SK-N-SH (cell line): ENCODE measurements at regions of chr3 and their contacts with region 1.

Region 1: DNA sequence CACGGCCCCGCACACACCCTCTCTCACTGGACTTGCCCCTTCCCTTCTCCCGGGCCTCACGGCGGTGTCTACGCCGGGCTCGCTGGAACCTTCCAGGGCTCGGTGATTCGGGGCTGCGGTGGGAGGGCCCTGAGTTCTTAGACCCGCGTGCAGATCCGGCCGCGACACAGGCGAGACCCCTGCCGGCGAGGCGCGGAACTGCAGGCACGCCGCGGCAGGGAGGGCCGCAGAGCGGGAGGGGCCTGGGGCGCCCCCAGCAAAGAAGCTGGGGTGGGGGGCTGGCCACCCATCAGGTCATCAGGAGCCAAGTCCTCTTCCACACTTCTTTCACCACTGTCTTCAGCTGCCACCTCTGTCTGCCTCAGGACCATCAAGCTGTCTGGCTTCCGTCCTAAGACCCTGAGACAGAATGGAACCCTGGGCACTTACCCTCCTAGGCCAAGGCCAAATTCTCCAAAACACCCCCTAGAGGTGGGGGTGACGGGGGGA is 164.5 kb downstream of the XXYLT1 start:
- DNase-seq: peak; percentile 94
- H3K4me3 ChIP-seq: no peak overlapping the region; a peak in 2 of 4 replicates
- H3K27ac ChIP-seq: no peak overlapping the region
- H3K4me1 ChIP-seq: peaks cover 11 to 17% of the 10 kb centered on the region in 2 experiments; a peak in 2 of 4 replicates
- H3K27me3 ChIP-seq: no peaks in the 10 kb centered on the region
- CTCF ChIP-seq: peak; percentile 97
- EP300 ChIP-seq: no peak
- RAD21 ChIP-seq: peak; percentile 88

Region 2: DNA sequence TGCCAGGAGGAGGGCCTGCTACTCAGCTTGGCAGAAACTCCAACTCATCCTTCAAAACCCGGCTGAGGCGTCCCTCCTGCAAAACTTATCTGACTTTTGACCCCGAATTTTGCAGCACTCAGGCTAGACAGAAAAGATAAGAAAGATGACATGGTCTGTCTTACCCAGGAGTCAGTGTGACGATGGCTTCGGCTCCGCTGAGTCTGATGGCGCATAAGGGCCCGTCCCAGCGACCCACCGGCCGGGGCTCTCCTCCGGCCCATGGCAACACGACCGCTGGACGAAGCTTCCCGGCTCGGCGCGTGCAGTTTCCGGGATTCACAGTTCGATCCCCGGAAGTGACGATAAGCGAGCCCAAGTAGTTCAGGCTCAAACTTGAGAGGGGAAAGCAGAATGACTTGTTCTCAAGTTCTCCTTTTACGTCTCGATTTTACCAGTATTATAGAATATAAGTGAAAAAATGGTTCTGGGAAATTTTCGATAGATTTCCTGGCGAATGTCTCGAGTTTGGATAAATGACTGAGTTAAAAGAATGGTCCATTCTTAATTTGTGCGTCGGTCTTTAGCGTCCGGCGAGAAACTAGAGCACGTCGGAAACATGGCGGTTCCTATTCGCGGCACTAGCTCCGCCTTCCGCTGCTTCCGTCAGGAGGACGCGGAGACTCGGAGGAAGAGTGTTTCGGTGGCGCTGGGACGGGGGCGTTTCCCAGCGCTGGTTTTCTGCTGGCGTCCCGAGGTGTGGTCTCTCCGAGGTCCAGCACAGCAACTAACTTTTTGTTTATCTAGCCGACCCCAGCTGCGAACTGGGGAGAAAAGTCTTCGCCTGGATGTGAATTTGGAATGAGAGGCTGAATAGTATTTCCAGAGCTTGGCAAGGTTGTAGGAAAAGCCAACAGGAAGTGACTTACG is 434.3 kb before region 1 on chr3 and contains the start of gene LSG1:
- CTCF ChIA-PET with region 1: interaction called, 25 read pairs
- POLR2A ChIA-PET with region 1: no interaction called
- DNase-seq: peak; percentile 89
- H3K4me3 ChIP-seq: peak within 1 kb of the TSS; percentile 94 to 95
- H3K27ac ChIP-seq: peak within 1 kb of the TSS; percentile 83 to 92
- H3K4me1 ChIP-seq: peaks cover 10 to 12% of the 10 kb centered on the region in 2 experiments; a peak in 3 of 4 replicates
- H3K27me3 ChIP-seq: no peaks in the 10 kb centered on the region
- CTCF ChIP-seq: no peak
- EP300 ChIP-seq: peak; percentile 18 to 57; a peak in 1 of 4 replicates
- RAD21 ChIP-seq: no peak
- polyA plus RNA-seq, gene LSG1: 35.1 and 43.7 TPM in 2 replicates

Region 3: DNA sequence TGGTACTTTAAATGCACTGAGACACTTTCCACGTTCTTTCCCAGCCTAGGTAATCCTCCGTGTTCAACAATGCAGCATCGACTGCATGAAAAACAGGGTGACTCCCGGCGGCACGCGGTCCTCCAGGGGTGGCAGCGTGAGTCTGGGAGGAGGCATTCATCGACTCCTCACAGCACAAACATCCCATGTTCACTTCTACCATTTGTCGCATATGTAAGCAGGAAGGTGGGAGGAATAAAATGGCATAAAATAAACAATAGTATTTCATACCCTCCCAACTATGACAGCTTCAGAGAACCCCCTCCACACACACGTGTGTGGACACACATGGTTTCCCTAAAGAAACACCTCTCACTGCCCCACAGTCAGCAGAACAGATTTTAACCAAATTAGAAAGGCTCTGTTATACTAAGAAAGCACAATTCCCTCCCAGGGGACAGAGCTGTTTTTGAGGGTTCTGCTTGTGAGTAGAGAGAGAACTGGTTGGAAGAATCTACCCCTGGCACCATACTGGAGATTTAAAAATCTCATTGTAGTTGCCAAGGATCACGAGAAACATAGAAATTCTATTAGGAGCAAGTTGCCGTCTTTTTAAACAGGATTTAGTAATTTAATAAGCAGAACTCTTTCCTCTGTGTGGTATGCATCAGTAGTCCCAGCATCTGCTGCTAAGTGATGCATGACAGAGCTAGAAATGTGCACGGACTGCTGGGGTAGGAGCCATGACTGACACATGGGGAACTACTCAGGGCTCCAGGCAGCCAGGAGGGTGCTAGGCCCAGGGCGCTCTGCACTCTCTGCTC is 414.8 kb before region 1 on chr3:
- CTCF ChIA-PET with region 1: interaction called, 20 read pairs
- POLR2A ChIA-PET with region 1: interaction called, 4 read pairs
- DNase-seq: peak; percentile 83
- H3K4me3 ChIP-seq: no peak overlapping the region
- H3K27ac ChIP-seq: peak overlapping the region in 1 of 2 experiments; percentile 82; a peak in 2 of 4 replicates
- H3K4me1 ChIP-seq: peaks cover 12 to 42% of the 10 kb centered on the region in 2 experiments
- H3K27me3 ChIP-seq: no peaks in the 10 kb centered on the region
- CTCF ChIP-seq: no peak
- EP300 ChIP-seq: peak in 1 of 2 experiments; percentile 50; a peak in 1 of 4 replicates
- RAD21 ChIP-seq: peak; percentile 7; the same call in 1 of the 2 replicates

Region 4: DNA sequence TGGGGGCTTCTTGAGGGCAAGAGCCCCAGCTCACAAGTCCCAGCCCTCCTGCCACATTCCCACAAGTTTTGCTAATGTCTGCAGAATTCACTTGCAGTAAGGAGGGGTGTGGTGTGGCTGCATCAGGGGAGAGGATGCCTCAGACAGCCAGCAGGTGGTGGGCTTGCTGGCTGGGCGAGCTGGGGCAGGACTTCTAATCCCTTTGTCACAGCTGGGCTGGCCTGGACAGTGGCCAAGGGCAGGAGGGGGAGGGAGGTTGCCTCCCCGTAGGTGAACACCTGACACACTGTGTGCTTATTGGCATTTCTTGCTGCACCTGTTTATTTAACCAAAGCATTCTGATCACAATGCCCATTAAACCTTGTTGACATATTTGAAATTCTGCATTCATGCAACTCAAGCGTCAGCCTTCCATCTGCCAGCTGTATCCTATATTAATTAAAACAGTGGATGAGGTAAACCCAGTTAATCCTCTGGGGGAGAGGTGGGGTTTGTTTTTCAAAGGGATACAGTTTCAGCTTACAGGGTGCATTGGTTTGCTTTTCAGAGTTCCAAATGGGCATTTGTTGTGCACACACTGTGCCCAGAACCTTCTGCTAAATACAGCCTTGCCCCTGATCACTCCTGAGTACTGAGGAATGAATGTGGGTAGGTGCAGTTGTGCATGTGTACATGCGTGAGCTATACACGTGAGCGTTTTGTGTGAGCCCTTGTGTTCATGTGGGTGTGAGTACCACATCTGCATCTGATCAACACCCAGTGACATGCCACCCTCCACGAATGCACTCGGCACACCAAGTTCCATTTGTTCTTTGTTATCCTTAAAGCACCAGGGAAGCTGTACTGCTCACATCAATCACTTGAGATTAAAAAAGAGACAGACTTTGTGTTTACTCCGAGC is 104.3 kb before region 1 on chr3:
- CTCF ChIA-PET with region 1: interaction called, 14 read pairs
- POLR2A ChIA-PET with region 1: no interaction called
- DNase-seq: peak; percentile 75
- H3K4me3 ChIP-seq: no peak overlapping the region
- H3K27ac ChIP-seq: no peak overlapping the region
- H3K4me1 ChIP-seq: peaks cover 0 to 17% of the 10 kb centered on the region in 2 experiments; a peak in 2 of 4 replicates
- H3K27me3 ChIP-seq: peaks cover 4% of the 10 kb centered on the region; the same call in 1 of the 2 replicates
- CTCF ChIP-seq: peak; percentile 51
- EP300 ChIP-seq: no peak
- RAD21 ChIP-seq: peak; percentile 68

Region 5: GRCh38 chr3:195094171-195094921 is 12.1 kb before region 1 on chr3:
- CTCF ChIA-PET with region 1: interaction called, 23 read pairs
- POLR2A ChIA-PET with region 1: no interaction called
- DNase-seq: no peak
- H3K4me3 ChIP-seq: no peak overlapping the region
- H3K27ac ChIP-seq: no peak overlapping the region; a peak in 1 of 4 replicates
- H3K4me1 ChIP-seq: peaks cover 0 to 36% of the 10 kb centered on the region in 2 experiments; a peak in 1 of 4 replicates
- H3K27me3 ChIP-seq: no peaks in the 10 kb centered on the region
- CTCF ChIP-seq: no peak
- EP300 ChIP-seq: no peak
- RAD21 ChIP-seq: no peak

Region 6: DNA sequence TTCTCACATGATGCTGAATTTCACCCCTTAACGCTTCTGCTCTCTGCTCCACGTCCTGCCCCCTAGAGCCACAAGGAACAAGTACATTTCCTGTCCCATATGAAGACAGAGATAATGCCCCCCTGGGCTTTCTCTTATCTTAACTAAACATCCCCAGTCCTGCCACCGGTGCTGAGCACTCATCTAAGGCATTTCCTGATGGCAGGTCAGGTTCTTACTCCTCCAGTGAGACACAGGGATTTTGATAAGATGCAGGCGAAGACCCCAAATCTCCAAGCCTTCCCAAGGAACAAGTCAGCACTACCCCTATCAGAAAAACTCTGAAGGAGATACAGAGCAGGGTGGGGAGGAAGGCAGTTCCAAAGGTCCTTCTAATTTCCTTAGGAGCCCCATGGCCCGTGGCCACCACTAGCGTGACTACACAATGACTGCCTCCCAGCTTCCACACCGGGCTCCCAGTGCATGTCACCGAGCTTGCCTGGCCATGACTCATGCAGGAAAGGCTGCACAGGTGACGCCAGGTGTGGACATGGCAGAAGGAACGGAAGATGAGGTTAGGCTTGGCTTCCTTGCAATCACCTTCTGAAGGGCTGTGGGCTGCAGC is 11.6 kb after region 1 on chr3:
- CTCF ChIA-PET with region 1: interaction called, 41 read pairs
- POLR2A ChIA-PET with region 1: no interaction called
- DNase-seq: no peak
- H3K4me3 ChIP-seq: no peak overlapping the region
- H3K27ac ChIP-seq: no peak overlapping the region
- H3K4me1 ChIP-seq: peaks cover 5 to 14% of the 10 kb centered on the region in 2 experiments; a peak in 1 of 4 replicates
- H3K27me3 ChIP-seq: no peaks in the 10 kb centered on the region
- CTCF ChIP-seq: peak; percentile 27; the same call in 1 of the 2 replicates
- EP300 ChIP-seq: no peak
- RAD21 ChIP-seq: no peak

Region 7: GRCh38 chr3:195259475-195260279 is 153.2 kb after region 1 on chr3:
- CTCF ChIA-PET with region 1: interaction called, 16 read pairs
- POLR2A ChIA-PET with region 1: no interaction called
- DNase-seq: peak; percentile 98
- H3K4me3 ChIP-seq: peak overlapping the region; percentile 63 to 72
- H3K27ac ChIP-seq: peak overlapping the region; percentile 83 to 97
- H3K4me1 ChIP-seq: peaks cover 18 to 57% of the 10 kb centered on the region in 2 experiments
- H3K27me3 ChIP-seq: no peaks in the 10 kb centered on the region
- CTCF ChIP-seq: peak; percentile 40
- EP300 ChIP-seq: peak in 1 of 2 experiments; percentile 45; a peak in 1 of 4 replicates
- RAD21 ChIP-seq: peak; percentile 65